ENCODE measurements at regions of chr18 and their contacts with region 1.

Region 1: GRCh38 chr18:51621113-51621863 is 423.8 kb upstream of the MEX3C start:
- DNase-seq: peak; percentile 53
- H3K4me3 ChIP-seq: no peak overlapping the region; a peak in 1 of 4 replicates
- H3K27ac ChIP-seq: no peak overlapping the region
- H3K4me1 ChIP-seq: peaks cover 3 to 8% of the 10 kb centered on the region in 2 experiments; a peak in 2 of 4 replicates
- H3K27me3 ChIP-seq: no peaks in the 10 kb centered on the region
- CTCF ChIP-seq: peak; percentile 84
- EP300 ChIP-seq: no peak
- RAD21 ChIP-seq: peak; percentile 95

Region 2: GRCh38 chr18:51110073-51110803 is 511.1 kb before region 1 on chr18:
- CTCF ChIA-PET with region 1: interaction called, 22 read pairs
- POLR2A ChIA-PET with region 1: no interaction called
- DNase-seq: peak; percentile 94
- H3K4me3 ChIP-seq: peak overlapping the region in 1 of 2 experiments; percentile 34; a peak in 1 of 4 replicates
- H3K27ac ChIP-seq: no peak overlapping the region
- H3K4me1 ChIP-seq: peaks cover 0 to 2% of the 10 kb centered on the region in 2 experiments; a peak in 1 of 4 replicates
- H3K27me3 ChIP-seq: no peaks in the 10 kb centered on the region
- CTCF ChIP-seq: peak; percentile 82
- EP300 ChIP-seq: no peak
- RAD21 ChIP-seq: peak; percentile 92

Region 3: DNA sequence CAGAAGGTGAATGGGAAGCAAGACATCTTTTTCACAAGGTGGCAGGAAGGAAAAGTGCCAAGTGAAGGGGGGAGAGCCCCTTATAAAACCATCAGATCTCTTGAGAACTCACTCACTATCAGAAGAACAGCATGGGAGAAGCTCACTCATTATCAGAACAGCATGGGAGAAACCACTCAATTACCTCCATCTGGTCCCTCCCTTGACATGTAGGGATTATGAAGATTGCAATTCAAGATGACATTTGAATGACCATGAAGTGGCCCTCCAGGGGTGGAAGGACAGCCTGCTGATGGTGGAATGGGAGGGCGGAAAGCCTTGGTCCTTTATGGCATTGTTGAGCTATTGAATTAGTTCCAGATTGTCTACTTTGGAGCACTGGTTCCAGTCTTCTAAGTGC is 10.8 kb before region 1 on chr18:
- CTCF ChIA-PET with region 1: interaction called, 24 read pairs
- POLR2A ChIA-PET with region 1: no interaction called
- DNase-seq: no peak
- H3K4me3 ChIP-seq: no peak overlapping the region
- H3K27ac ChIP-seq: no peak overlapping the region
- H3K4me1 ChIP-seq: no peaks in the 10 kb centered on the region; a peak in 1 of 4 replicates
- H3K27me3 ChIP-seq: no peaks in the 10 kb centered on the region
- CTCF ChIP-seq: no peak
- EP300 ChIP-seq: no peak
- RAD21 ChIP-seq: no peak

Region 4: DNA sequence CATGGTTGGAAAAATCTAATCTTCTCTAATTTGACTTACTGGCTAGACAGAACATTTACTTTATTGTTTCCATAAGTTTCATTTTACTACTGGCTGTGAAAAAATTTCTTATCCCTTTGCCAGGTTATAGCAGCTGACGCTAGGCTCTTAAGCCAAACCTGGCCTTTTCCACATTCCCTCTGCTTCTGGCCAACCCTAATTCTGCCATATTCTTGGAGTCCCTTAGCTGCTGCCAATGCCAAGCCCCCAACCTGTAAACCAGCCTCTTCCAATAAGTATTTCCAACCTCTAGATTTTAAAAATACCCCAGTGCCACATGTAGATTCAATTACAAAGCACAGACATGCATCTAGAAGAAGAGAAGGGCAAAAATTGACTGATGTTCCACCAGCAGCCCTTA is 28.5 kb after region 1 on chr18:
- CTCF ChIA-PET with region 1: interaction called, 13 read pairs
- POLR2A ChIA-PET with region 1: no interaction called
- DNase-seq: no peak
- H3K4me3 ChIP-seq: no peak overlapping the region
- H3K27ac ChIP-seq: no peak overlapping the region
- H3K4me1 ChIP-seq: peaks cover 0 to 7% of the 10 kb centered on the region in 2 experiments; a peak in 1 of 4 replicates
- H3K27me3 ChIP-seq: no peaks in the 10 kb centered on the region; the same call in 1 of the 2 replicates
- CTCF ChIP-seq: no peak
- EP300 ChIP-seq: no peak
- RAD21 ChIP-seq: no peak

Region 5: DNA sequence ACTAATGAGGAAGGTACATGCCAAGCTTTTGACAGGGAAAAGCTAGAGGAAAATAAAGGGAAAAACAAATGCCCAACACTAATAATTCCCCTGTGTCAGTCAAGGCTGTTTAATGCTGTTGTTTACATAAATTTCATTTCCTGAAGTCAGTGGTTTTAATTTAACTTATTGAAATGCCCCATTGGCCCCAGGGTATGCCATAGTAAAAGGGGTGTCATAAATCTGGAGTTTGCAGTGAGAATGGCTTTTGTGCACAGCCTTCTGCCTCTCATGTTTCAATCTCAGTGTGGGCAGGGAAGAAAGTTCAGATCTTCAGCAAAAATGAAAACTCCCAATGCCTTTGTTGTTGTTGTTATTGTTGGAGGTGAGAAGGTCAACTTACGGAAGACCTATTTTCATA is 168.6 kb after region 1 on chr18:
- CTCF ChIA-PET with region 1: no interaction called
- POLR2A ChIA-PET with region 1: no interaction called
- DNase-seq: no peak
- H3K4me3 ChIP-seq: no peak overlapping the region
- H3K27ac ChIP-seq: no peak overlapping the region
- H3K4me1 ChIP-seq: no peaks in the 10 kb centered on the region
- H3K27me3 ChIP-seq: no peaks in the 10 kb centered on the region
- CTCF ChIP-seq: no peak
- EP300 ChIP-seq: no peak
- RAD21 ChIP-seq: no peak

Region 6: GRCh38 chr18:52288403-52289004 is 667.2 kb after region 1 on chr18:
- CTCF ChIA-PET with region 1: interaction called, 19 read pairs
- POLR2A ChIA-PET with region 1: no interaction called
- DNase-seq: peak; percentile 28
- H3K4me3 ChIP-seq: no peak overlapping the region; a peak in 1 of 4 replicates
- H3K27ac ChIP-seq: no peak overlapping the region
- H3K4me1 ChIP-seq: peaks cover 6 to 18% of the 10 kb centered on the region in 2 experiments; a peak in 3 of 4 replicates
- H3K27me3 ChIP-seq: no peaks in the 10 kb centered on the region
- CTCF ChIP-seq: peak; percentile 67
- EP300 ChIP-seq: no peak
- RAD21 ChIP-seq: peak; percentile 71